CD14-positive monocyte (primary cell): ENCODE measurements at regions of chr1 and their contacts with region 1.

Region 1: DNA sequence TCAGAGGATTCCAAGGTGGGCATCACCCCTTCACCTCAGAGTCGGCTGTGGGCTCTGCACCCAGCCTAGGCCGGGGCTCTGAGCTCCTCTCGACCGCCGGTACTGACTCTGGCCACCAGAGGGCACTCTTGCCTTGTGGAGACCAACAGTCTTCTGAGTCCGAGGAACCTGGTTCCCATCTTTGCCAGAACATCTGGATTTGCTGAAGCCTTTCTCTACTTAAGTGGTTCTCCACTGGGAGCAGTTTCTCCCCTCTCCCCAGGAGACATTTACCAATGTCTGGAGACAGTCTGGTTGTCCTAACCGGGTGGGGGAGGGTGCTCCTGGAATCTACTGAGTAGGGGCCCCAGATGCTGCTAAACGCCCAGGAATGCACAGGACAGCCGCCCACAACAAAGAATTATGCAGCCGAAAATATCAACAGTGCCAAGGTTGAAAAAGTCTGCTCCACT is 9.4 kb downstream of the ETV3L start:
- DNase-seq: peak; percentile 76 to 83 (median 83)
- H3K4me3 ChIP-seq: no peak overlapping the region
- H3K4me3 Mint-ChIP-seq: no peak overlapping the region
- H3K27ac ChIP-seq: no peak overlapping the region
- H3K27ac Mint-ChIP-seq: peak overlapping the region in 1 of 7 donors; percentile 33
- H3K4me1 ChIP-seq: peaks cover 12 to 13% of the 10 kb centered on the region in 2 donors
- H3K4me1 Mint-ChIP-seq: peaks cover 9% of the 10 kb centered on the region
- H3K27me3 ChIP-seq: no peaks in the 10 kb centered on the region
- H3K27me3 Mint-ChIP-seq: peaks cover 2 to 13% (median 3%) of the 10 kb centered on the region in 3 donors
- CTCF ChIP-seq: peak; percentile 93

Region 2: GRCh38 chr1:157105988-157106812 is 16.0 kb after region 1 on chr1:
- intact Hi-C with region 1: loop called in 1 of 2 experiments (anchors 2 kb)
- DNase-seq: peak; percentile 98 to 100 (median 99)
- H3K4me3 ChIP-seq: peak overlapping the region in 1 of 3 experiments; percentile 30
- H3K4me3 Mint-ChIP-seq: peak overlapping the region; percentile 34 to 62
- H3K27ac ChIP-seq: peak overlapping the region; percentile 96 to 100
- H3K27ac Mint-ChIP-seq: peak overlapping the region; percentile 94 to 99 (median 97)
- H3K4me1 ChIP-seq: peaks cover 42 to 60% of the 10 kb centered on the region in 2 donors
- H3K4me1 Mint-ChIP-seq: peaks cover 57% of the 10 kb centered on the region
- H3K27me3 ChIP-seq: peaks cover 0 to 5% of the 10 kb centered on the region in 2 donors
- H3K27me3 Mint-ChIP-seq: peaks cover 14 to 28% (median 15%) of the 10 kb centered on the region in 3 donors
- CTCF ChIP-seq: no peak

Region 3: GRCh38 chr1:157117527-157118057 is 27.4 kb after region 1 on chr1:
- intact Hi-C with region 1: no loop called
- DNase-seq: peak; percentile 32 to 68 (median 66)
- H3K4me3 ChIP-seq: no peak overlapping the region
- H3K4me3 Mint-ChIP-seq: no peak overlapping the region
- H3K27ac ChIP-seq: no peak overlapping the region
- H3K27ac Mint-ChIP-seq: no peak overlapping the region
- H3K4me1 ChIP-seq: peaks cover 23 to 24% of the 10 kb centered on the region in 2 donors
- H3K4me1 Mint-ChIP-seq: peaks cover 23% of the 10 kb centered on the region
- H3K27me3 ChIP-seq: no peaks in the 10 kb centered on the region
- H3K27me3 Mint-ChIP-seq: peaks cover 0 to 7% (median 3%) of the 10 kb centered on the region in 3 donors
- CTCF ChIP-seq: no peak